ENCODE measurements at regions of chr2 and their contacts with region 1.

Region 1: GRCh38 chr2:166140932-166141331 is 13.1 kb upstream of the SCN1A start:
- DNase-seq: no peak
- H3K4me3 Mint-ChIP-seq: no peak overlapping the region
- H3K27ac Mint-ChIP-seq: no peak overlapping the region
- H3K4me1 Mint-ChIP-seq: no peaks in the 10 kb centered on the region
- H3K27me3 Mint-ChIP-seq: peaks cover 22% of the 10 kb centered on the region
- CTCF ChIP-seq: no peak

Region 2: GRCh38 chr2:166127217-166128155 is 13.4 kb before region 1 on chr2 and contains the start of gene SCN1A:
- CTCF ChIA-PET with region 1: interaction called, 17 read pairs
- POLR2A ChIA-PET with region 1: no interaction called
- intact Hi-C with region 1: no loop called
- DNase-seq: peak; percentile 48
- H3K4me3 Mint-ChIP-seq: no peak within 1 kb of the TSS
- H3K27ac Mint-ChIP-seq: no peak within 1 kb of the TSS
- H3K4me1 Mint-ChIP-seq: peaks cover 14% of the 10 kb centered on the region
- H3K27me3 Mint-ChIP-seq: peaks cover 64% of the 10 kb centered on the region
- CTCF ChIP-seq: peak; percentile 57
- total RNA-seq, gene SCN1A: not detected in 2 replicates